Naive thymus-derived CD4-positive, alpha-beta T cell (primary cell): ENCODE measurements at regions of chr2 and their contacts with region 1.

Region 1: DNA sequence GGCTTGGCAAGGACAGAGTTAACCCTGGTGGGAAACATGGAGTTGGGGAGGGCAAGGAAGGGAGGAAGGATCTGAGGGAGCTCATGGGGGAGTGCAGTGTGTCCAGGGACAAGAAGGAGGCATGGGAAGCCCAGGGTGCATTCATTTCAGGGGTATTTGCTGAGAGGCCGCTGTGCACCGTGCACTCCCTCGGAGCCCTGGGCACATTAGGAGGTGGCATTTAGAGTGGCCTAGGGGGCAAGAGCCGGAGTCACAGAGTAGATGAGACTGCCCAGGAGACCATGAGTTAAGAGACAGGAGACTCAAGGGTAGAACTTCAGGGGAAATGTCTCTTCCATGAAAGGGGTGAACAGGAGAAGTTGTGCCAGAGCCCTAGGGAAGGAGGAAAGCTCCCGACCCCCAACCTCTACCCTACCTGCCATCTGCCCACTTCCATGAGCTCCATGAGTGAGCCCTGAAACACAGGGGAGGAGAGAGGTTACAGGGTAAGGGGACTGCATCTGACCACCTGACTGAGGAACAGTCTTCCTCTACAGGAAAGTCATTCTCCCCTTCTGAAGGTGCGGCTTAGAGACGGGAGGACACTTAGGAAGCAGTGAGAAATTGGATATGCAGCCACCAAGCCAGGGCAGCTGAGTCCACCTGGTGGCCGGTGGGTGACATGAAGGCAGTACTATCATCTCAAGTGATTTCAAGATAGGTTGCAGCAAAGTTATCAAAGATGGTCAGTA is 58.5 kb upstream of the COPS8 start:
- DNase-seq: peak in 8 of 9 donors; percentile 7 to 53 (median 28)
- ATAC-seq: peak; percentile 64
- H3K4me3 ChIP-seq: no peak overlapping the region
- H3K4me3 Mint-ChIP-seq: no peak overlapping the region
- H3K27ac ChIP-seq: no peak overlapping the region
- H3K27ac Mint-ChIP-seq: no peak overlapping the region
- H3K4me1 ChIP-seq: no peaks in the 10 kb centered on the region
- H3K4me1 Mint-ChIP-seq: no peaks in the 10 kb centered on the region
- H3K27me3 ChIP-seq: no peaks in the 10 kb centered on the region
- H3K27me3 Mint-ChIP-seq: peaks cover 0 to 7% (median 0%) of the 10 kb centered on the region in 5 donors

Region 2: GRCh38 chr2:236352761-236353593 is 674.2 kb before region 1 on chr2:
- CTCF ChIA-PET with region 1: interaction called, 6 read pairs
- POLR2A ChIA-PET with region 1: no interaction called
- intact Hi-C with region 1: loop called (anchors 1 kb)
- DNase-seq: peak in 5 of 9 donors; percentile 29 to 48 (median 45)
- ATAC-seq: peak; percentile 50
- H3K4me3 ChIP-seq: no peak overlapping the region
- H3K4me3 Mint-ChIP-seq: no peak overlapping the region
- H3K27ac ChIP-seq: no peak overlapping the region
- H3K27ac Mint-ChIP-seq: peak overlapping the region in 1 of 9 donors; percentile 59
- H3K4me1 ChIP-seq: no peaks in the 10 kb centered on the region
- H3K4me1 Mint-ChIP-seq: peaks cover 0 to 7% (median 4%) of the 10 kb centered on the region in 7 donors
- H3K27me3 ChIP-seq: no peaks in the 10 kb centered on the region
- H3K27me3 Mint-ChIP-seq: peaks cover 0 to 14% (median 8%) of the 10 kb centered on the region in 5 donors

Region 3: DNA sequence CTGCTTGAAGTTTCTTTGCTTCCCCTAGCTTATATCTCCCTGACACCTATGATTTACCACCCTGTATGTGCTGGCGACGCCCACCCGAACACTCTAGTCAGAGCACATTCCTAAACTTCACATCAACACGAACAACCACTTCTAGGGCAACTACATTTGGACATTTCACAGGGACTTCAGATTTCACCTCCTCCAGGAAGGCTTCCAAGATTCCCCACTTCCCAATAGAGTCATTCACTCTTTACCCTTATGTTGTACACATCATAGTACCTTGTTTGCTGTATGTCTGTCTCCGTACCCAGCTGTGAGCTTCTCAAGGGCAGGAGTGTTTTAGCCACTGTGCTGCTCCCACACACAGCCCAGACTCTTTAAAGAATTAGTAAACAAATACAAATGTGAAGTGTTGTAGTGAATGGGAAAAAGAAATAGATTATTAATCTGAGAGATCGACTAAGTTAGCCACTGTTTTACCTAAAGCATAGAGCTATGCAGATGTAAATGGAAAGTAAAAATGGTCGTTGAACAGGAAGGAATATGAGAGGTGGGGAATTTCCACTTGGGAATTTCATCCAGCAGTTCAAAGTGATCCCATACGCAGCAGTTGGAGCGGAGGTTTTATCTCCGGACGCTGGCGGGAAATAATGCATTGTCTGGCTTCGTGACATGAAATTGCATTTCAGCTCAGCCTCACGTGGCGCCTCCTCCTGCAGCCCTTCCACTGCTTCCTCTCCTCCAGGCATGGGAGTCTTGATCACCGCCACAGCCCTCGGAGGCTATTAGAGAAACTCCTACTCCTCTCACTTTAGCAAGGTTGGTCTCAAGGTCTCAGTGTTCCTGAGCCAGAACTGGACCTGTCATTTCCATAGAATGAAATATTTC is 174.8 kb before region 1 on chr2:
- CTCF ChIA-PET with region 1: no interaction called
- POLR2A ChIA-PET with region 1: no interaction called
- intact Hi-C with region 1: loop called in 1 of 2 experiments (anchors 5 kb)
- DNase-seq: no peak
- ATAC-seq: no peak
- H3K4me3 ChIP-seq: no peak overlapping the region
- H3K4me3 Mint-ChIP-seq: no peak overlapping the region
- H3K27ac ChIP-seq: no peak overlapping the region
- H3K27ac Mint-ChIP-seq: no peak overlapping the region
- H3K4me1 ChIP-seq: no peaks in the 10 kb centered on the region
- H3K4me1 Mint-ChIP-seq: no peaks in the 10 kb centered on the region
- H3K27me3 ChIP-seq: no peaks in the 10 kb centered on the region
- H3K27me3 Mint-ChIP-seq: peaks cover 0 to 17% (median 0%) of the 10 kb centered on the region in 5 donors

Region 4: GRCh38 chr2:236928380-236929037 is 98.6 kb before region 1 on chr2:
- CTCF ChIA-PET with region 1: no interaction called
- POLR2A ChIA-PET with region 1: no interaction called
- intact Hi-C with region 1: loop called in 1 of 2 experiments (anchors 2 kb)
- DNase-seq: no peak
- ATAC-seq: no peak
- H3K4me3 ChIP-seq: peak overlapping the region; percentile 35
- H3K4me3 Mint-ChIP-seq: peak overlapping the region; percentile 60 to 86 (median 78)
- H3K27ac ChIP-seq: no peak overlapping the region
- H3K27ac Mint-ChIP-seq: peak overlapping the region in 5 of 9 donors; percentile 16 to 81 (median 56)
- H3K4me1 ChIP-seq: peaks cover 0 to 6% of the 10 kb centered on the region in 2 donors
- H3K4me1 Mint-ChIP-seq: peaks cover 0 to 7% (median 0%) of the 10 kb centered on the region in 7 donors
- H3K27me3 ChIP-seq: no peaks in the 10 kb centered on the region
- H3K27me3 Mint-ChIP-seq: peaks cover 0 to 42% (median 21%) of the 10 kb centered on the region in 5 donors

Region 5: DNA sequence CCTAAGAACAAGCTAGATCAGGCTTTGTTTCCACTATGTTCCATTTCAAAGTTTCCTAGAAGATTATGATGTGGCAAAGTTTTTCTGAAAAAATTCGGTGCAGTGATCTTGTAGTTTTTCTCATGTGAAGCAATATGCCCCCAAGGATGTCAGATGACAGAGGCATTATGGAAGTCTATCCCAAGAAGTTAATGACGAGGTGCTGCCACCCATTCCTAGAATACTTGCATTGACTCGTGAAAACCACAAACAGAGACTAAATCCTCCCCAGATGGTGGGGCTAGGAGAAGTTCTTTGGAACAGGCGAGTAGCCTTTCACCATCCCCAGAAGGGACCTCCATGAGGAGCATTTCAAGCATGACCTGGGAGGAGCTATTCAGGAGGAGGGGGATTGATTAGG is 18.3 kb after region 1 on chr2:
- CTCF ChIA-PET with region 1: no interaction called
- POLR2A ChIA-PET with region 1: no interaction called
- intact Hi-C with region 1: no loop called
- DNase-seq: no peak
- ATAC-seq: no peak
- H3K4me3 ChIP-seq: no peak overlapping the region
- H3K4me3 Mint-ChIP-seq: no peak overlapping the region
- H3K27ac ChIP-seq: no peak overlapping the region
- H3K27ac Mint-ChIP-seq: peak overlapping the region in 1 of 9 donors; percentile 21
- H3K4me1 ChIP-seq: no peaks in the 10 kb centered on the region
- H3K4me1 Mint-ChIP-seq: no peaks in the 10 kb centered on the region
- H3K27me3 ChIP-seq: no peaks in the 10 kb centered on the region
- H3K27me3 Mint-ChIP-seq: peaks cover 0 to 16% (median 10%) of the 10 kb centered on the region in 5 donors